ENCODE measurements at regions of chrX and their contacts with region 1.

Region 1: GRCh38 chrX:49269010-49269767 is 404 bp upstream of the PPP1R3F start:
- DNase-seq: peak; percentile 72 to 97 (median 94)
- ATAC-seq: peak; percentile 89
- H3K4me3 ChIP-seq: peak overlapping the region; percentile 96
- H3K4me3 Mint-ChIP-seq: peak overlapping the region; percentile 91 to 100 (median 96)
- H3K27ac ChIP-seq: peak overlapping the region; percentile 99
- H3K27ac Mint-ChIP-seq: peak overlapping the region; percentile 99 to 100 (median 99)
- H3K4me1 ChIP-seq: peaks cover 30 to 34% of the 10 kb centered on the region in 2 donors
- H3K4me1 Mint-ChIP-seq: peaks cover 17 to 51% (median 42%) of the 10 kb centered on the region in 7 donors
- H3K27me3 ChIP-seq: no peaks in the 10 kb centered on the region
- H3K27me3 Mint-ChIP-seq: no peaks in the 10 kb centered on the region

Region 2: DNA sequence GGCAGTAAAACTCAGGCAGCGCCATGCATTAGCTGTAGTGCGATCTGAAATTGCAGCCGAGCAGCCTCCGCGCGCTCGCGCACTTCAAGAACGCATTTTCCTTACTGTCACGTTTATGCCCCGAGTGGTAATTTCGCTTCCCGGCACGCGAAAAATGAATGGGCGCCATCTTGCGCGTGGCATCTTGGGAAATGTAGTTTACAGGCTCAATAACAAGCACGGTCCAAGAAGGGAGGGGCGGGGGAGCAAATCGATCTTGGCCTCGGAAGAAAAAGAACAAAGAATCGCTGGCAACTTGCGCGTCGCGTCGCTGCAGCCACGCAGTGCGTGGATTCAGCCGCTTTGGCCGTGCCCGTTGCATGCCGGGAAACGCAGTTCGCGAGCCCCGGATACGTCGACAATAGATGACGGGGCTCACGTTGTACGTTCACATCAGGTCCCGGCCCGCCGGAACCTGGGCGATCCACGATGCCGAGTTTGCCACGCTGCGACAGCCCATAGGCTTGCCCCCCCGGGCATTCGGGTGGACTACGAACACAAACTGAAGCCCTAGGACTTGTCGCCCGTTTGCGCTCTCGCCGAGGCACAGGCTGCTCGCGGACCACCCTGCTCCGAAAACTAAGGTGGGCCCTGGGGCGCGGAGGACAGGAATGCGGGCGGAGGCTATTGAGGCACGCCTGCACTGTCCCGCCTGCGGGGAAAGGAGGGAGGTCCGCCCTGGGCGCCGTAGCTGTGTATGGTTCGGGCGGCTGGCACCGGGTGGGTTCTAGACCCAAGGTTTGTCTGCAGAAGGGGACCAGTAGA is 793.2 kb before region 1 on chrX and contains the start of gene FTSJ1:
- CTCF ChIA-PET with region 1: no interaction called
- POLR2A ChIA-PET with region 1: no interaction called
- intact Hi-C with region 1: loop called in 1 of 2 experiments (anchors 2 kb)
- DNase-seq: peak; percentile 59 to 95 (median 91)
- ATAC-seq: peak; percentile 93
- H3K4me3 ChIP-seq: peak within 1 kb of the TSS; percentile 83
- H3K4me3 Mint-ChIP-seq: peak within 1 kb of the TSS; percentile 74 to 93 (median 88)
- H3K27ac ChIP-seq: peak within 1 kb of the TSS; percentile 93
- H3K27ac Mint-ChIP-seq: peak within 1 kb of the TSS; percentile 84 to 96 (median 93)
- H3K4me1 ChIP-seq: peaks cover 8 to 10% of the 10 kb centered on the region in 2 donors
- H3K4me1 Mint-ChIP-seq: peaks cover 19 to 35% (median 26%) of the 10 kb centered on the region in 7 donors
- H3K27me3 ChIP-seq: no peaks in the 10 kb centered on the region
- H3K27me3 Mint-ChIP-seq: no peaks in the 10 kb centered on the region
- total RNA-seq, gene FTSJ1: 48.6 to 62.5 (median 59.5) TPM

Region 3: GRCh38 chrX:49002091-49002935 is 266.9 kb before region 1 on chrX and contains the start of gene GRIPAP1:
- CTCF ChIA-PET with region 1: no interaction called
- POLR2A ChIA-PET with region 1: no interaction called
- intact Hi-C with region 1: loop called in 1 of 2 experiments (anchors 1 kb)
- DNase-seq: peak; percentile 61 to 87 (median 79)
- ATAC-seq: peak; percentile 88
- H3K4me3 ChIP-seq: peak within 1 kb of the TSS; percentile 97
- H3K4me3 Mint-ChIP-seq: peak within 1 kb of the TSS; percentile 94 to 99 (median 98)
- H3K27ac ChIP-seq: peak within 1 kb of the TSS; percentile 97
- H3K27ac Mint-ChIP-seq: peak within 1 kb of the TSS; percentile 92 to 100 (median 98)
- H3K4me1 ChIP-seq: peaks cover 9 to 10% of the 10 kb centered on the region in 2 donors
- H3K4me1 Mint-ChIP-seq: peaks cover 7 to 43% (median 32%) of the 10 kb centered on the region in 7 donors
- H3K27me3 ChIP-seq: no peaks in the 10 kb centered on the region
- H3K27me3 Mint-ChIP-seq: no peaks in the 10 kb centered on the region
- total RNA-seq, gene GRIPAP1: 103 to 108 (median 105) TPM

Region 4: DNA sequence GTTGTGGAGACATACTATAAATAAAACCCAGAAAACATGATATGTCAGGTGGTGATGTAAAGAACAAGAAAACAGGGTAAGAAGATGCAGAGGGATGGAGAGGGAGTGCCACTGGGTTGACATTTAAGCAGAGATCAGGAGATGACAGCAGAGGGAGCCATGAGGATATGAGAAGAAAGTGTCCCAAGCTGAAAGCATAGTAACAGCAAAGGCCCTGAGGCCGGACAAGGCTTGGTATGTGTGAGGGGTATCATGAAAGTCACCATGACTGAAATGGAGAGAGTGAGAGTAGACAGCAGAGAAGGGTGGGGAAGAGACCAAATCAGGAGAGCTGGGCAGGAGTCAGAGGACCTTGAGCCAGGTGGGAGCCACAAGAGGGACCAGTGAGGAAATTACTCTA is 149.1 kb before region 1 on chrX:
- CTCF ChIA-PET with region 1: no interaction called
- POLR2A ChIA-PET with region 1: no interaction called
- intact Hi-C with region 1: loop called in 1 of 2 experiments (anchors 1 kb)
- DNase-seq: no peak
- ATAC-seq: no peak
- H3K4me3 ChIP-seq: no peak overlapping the region
- H3K4me3 Mint-ChIP-seq: peak overlapping the region in 3 of 10 donors; percentile 9 to 24 (median 12)
- H3K27ac ChIP-seq: no peak overlapping the region
- H3K27ac Mint-ChIP-seq: peak overlapping the region in 2 of 9 donors; percentile 12 to 30
- H3K4me1 ChIP-seq: peaks cover 16 to 18% of the 10 kb centered on the region in 2 donors
- H3K4me1 Mint-ChIP-seq: peaks cover 32 to 59% (median 37%) of the 10 kb centered on the region in 7 donors
- H3K27me3 ChIP-seq: no peaks in the 10 kb centered on the region
- H3K27me3 Mint-ChIP-seq: no peaks in the 10 kb centered on the region

Region 5: GRCh38 chrX:49199906-49200771 is 69.0 kb before region 1 on chrX and contains the start of gene SYP:
- CTCF ChIA-PET with region 1: no interaction called
- POLR2A ChIA-PET with region 1: interaction called, 4 read pairs
- intact Hi-C with region 1: loop called (anchors 1 to 2 kb)
- DNase-seq: peak; percentile 82 to 89 (median 87)
- ATAC-seq: peak; percentile 100
- H3K4me3 ChIP-seq: peak within 1 kb of the TSS; percentile 50
- H3K4me3 Mint-ChIP-seq: peak within 1 kb of the TSS; percentile 65 to 79 (median 70)
- H3K27ac ChIP-seq: peak within 1 kb of the TSS; percentile 64
- H3K27ac Mint-ChIP-seq: peak within 1 kb of the TSS in 8 of 9 donors; percentile 23 to 84 (median 68)
- H3K4me1 ChIP-seq: no peaks in the 10 kb centered on the region
- H3K4me1 Mint-ChIP-seq: peaks cover 9 to 22% (median 12%) of the 10 kb centered on the region in 7 donors
- H3K27me3 ChIP-seq: no peaks in the 10 kb centered on the region
- H3K27me3 Mint-ChIP-seq: peaks cover 0 to 17% (median 0%) of the 10 kb centered on the region in 5 donors
- total RNA-seq, gene SYP: 0.35 to 2.2 (median 1.1) TPM

Region 6: GRCh38 chrX:49309401-49309981 is 40.3 kb after region 1 on chrX:
- CTCF ChIA-PET with region 1: interaction called, 4 read pairs
- POLR2A ChIA-PET with region 1: interaction called, 23 read pairs
- intact Hi-C with region 1: loop called (anchors 1 to 2 kb)
- DNase-seq: peak in 7 of 9 donors; percentile 23 to 64 (median 52)
- ATAC-seq: peak; percentile 69
- H3K4me3 ChIP-seq: peak overlapping the region; percentile 54
- H3K4me3 Mint-ChIP-seq: peak overlapping the region; percentile 82 to 95 (median 86)
- H3K27ac ChIP-seq: peak overlapping the region; percentile 70
- H3K27ac Mint-ChIP-seq: peak overlapping the region; percentile 92 to 100 (median 98)
- H3K4me1 ChIP-seq: peaks cover 10 to 15% of the 10 kb centered on the region in 2 donors
- H3K4me1 Mint-ChIP-seq: peaks cover 19 to 29% (median 21%) of the 10 kb centered on the region in 7 donors
- H3K27me3 ChIP-seq: no peaks in the 10 kb centered on the region
- H3K27me3 Mint-ChIP-seq: peaks cover 0 to 25% (median 0%) of the 10 kb centered on the region in 5 donors